Activated B cell treated with CpG ODN at 0.5 μM for 24 hours (primary cell): ENCODE measurements at regions of chr17 and their contacts with region 1.

Region 1: GRCh38 chr17:16215273-16215964 is at the start of gene NCOR1:
- DNase-seq: peak; percentile 83
- ATAC-seq: peak; percentile 86
- H3K4me3 Mint-ChIP-seq: peak within 1 kb of the TSS; percentile 98
- H3K27ac Mint-ChIP-seq: peak within 1 kb of the TSS; percentile 86
- H3K4me1 Mint-ChIP-seq: peaks cover 50% of the 10 kb centered on the region
- H3K27me3 Mint-ChIP-seq: no peaks in the 10 kb centered on the region
- CTCF ChIP-seq: no peak
- total RNA-seq, gene NCOR1: 163 and 188 TPM in 2 replicates

Region 2: GRCh38 chr17:16199093-16199492 is 16.3 kb before region 1 on chr17:
- CTCF ChIA-PET with region 1: interaction called, 4 read pairs
- POLR2A ChIA-PET with region 1: interaction called, 4 read pairs
- intact Hi-C with region 1: loop called (anchors 1 kb)
- DNase-seq: no peak
- ATAC-seq: no peak
- H3K4me3 Mint-ChIP-seq: peak overlapping the region; percentile 67
- H3K27ac Mint-ChIP-seq: peak overlapping the region; percentile 83
- H3K4me1 Mint-ChIP-seq: peaks cover 59% of the 10 kb centered on the region
- H3K27me3 Mint-ChIP-seq: no peaks in the 10 kb centered on the region
- CTCF ChIP-seq: no peak

Region 3: DNA sequence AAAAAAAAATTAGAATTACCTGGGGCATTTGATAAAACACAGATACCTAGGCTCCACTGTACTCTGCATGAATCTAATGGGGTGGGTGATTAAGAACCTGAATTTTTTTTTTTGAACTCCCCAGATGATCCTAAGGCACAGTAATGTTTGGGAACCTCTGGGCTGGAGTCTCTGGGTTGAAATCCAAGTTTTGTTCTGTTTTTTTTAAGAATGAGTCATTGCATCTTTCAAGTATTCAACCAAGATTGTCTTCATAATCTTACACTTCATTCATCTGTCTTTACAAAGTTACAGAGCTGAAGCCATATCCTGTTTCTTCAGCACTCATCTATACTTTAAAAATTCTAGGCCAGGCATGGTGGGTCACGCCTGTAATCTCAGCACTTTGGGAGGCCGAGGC is 54.2 kb after region 1 on chr17:
- CTCF ChIA-PET with region 1: no interaction called
- POLR2A ChIA-PET with region 1: interaction called, 11 read pairs
- intact Hi-C with region 1: no loop called
- DNase-seq: no peak
- ATAC-seq: no peak
- H3K4me3 Mint-ChIP-seq: no peak overlapping the region
- H3K27ac Mint-ChIP-seq: no peak overlapping the region
- H3K4me1 Mint-ChIP-seq: peaks cover 33% of the 10 kb centered on the region
- H3K27me3 Mint-ChIP-seq: no peaks in the 10 kb centered on the region
- CTCF ChIP-seq: no peak

Region 4: DNA sequence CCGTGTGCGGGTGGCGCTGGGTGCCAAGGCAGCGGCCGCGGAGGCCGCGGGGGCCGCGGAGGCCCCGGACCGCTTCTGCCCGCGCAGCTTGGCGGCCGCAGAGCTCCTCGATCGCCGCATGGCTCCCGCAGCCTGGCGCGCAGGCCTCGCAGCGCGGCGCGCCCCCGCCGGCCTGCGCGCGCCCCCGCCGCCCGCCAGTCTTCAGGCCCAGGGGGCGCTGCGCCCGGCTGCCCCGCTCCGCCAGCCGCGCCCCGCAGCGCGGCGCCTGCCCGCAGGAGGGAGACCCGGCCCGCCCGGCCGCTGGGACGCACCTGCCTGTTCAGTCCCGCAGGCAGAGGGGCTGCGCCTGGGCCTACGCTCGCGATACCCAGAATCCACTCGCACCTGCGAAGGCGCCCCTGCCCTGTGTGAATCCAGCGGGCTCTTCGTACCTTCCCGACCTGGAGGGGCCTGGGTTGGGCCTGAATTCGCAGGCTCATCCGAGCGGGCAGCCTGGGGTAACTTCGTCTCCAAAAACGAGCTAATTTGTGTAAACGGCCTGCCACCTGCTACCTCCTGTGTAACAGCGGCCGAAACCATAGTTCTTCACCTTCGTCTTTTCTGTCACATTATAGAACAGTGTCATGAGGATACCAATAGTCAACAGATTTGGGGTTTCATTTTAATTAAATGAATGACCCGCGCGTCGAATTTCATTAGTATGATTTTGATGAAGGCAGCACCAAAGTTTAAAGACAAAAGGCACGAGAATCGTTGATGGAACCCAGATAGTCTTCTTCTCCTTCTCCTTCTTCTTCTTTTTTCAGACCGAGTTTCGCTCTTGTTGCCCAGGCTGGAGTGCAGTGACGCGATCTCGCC is 138.1 kb after region 1 on chr17 and contains the start of gene CENPV:
- CTCF ChIA-PET with region 1: interaction called, 12 read pairs
- POLR2A ChIA-PET with region 1: interaction called, 10 read pairs
- intact Hi-C with region 1: loop called (anchors 1 kb)
- DNase-seq: peak; percentile 73
- ATAC-seq: peak; percentile 82
- H3K4me3 Mint-ChIP-seq: peak within 1 kb of the TSS; percentile 90
- H3K27ac Mint-ChIP-seq: peak within 1 kb of the TSS; percentile 71
- H3K4me1 Mint-ChIP-seq: peaks cover 18% of the 10 kb centered on the region
- H3K27me3 Mint-ChIP-seq: no peaks in the 10 kb centered on the region
- CTCF ChIP-seq: no peak
- total RNA-seq, gene CENPV: 24.0 and 25.7 TPM in 2 replicates